Activated CD4-positive, alpha-beta T cell treated with anti-CD3 and anti-CD28 coated beads, Interleukin-2, amount 10 ng/mL, durations not matched to agents 24 days and 14 days (primary cell): ENCODE measurements at regions of chrX and their contacts with region 1.

Region 1: GRCh38 chrX:57918750-57919436 is 8.6 kb upstream of the ZXDA start:
- DNase-seq: peak; percentile 81
- H3K4me3 Mint-ChIP-seq: no peak overlapping the region
- H3K27ac Mint-ChIP-seq: no peak overlapping the region
- H3K4me1 Mint-ChIP-seq: no peaks in the 10 kb centered on the region
- H3K27me3 Mint-ChIP-seq: no peaks in the 10 kb centered on the region

Region 2: DNA sequence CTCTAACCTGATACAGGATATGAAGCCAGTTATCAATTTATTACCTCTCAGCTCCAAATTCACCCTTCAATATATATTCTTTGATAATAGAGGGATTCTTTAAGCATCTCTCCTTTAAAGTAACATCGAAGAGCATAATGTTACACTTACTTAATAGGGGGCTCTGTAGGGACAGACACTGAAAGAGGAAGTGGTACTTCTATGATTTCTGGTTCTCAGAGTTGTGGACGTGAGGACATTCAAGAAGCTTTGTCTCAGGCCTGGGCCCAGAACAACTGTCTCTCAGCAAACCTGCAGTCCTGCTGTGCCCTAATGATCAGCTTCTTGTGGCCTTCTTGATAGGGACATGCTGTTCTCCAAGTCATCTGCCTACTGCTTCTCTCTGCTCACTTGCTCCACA is 331.3 kb before region 1 on chrX:
- intact Hi-C with region 1: loop called (anchors 2 kb)
- DNase-seq: no peak
- H3K4me3 Mint-ChIP-seq: no peak overlapping the region
- H3K27ac Mint-ChIP-seq: no peak overlapping the region
- H3K4me1 Mint-ChIP-seq: peaks cover 3% of the 10 kb centered on the region
- H3K27me3 Mint-ChIP-seq: no peaks in the 10 kb centered on the region

Region 3: GRCh38 chrX:57821703-57822375 is 97.1 kb before region 1 on chrX:
- intact Hi-C with region 1: loop called (anchors 2 kb)
- DNase-seq: peak; percentile 77
- H3K4me3 Mint-ChIP-seq: no peak overlapping the region
- H3K27ac Mint-ChIP-seq: no peak overlapping the region
- H3K4me1 Mint-ChIP-seq: no peaks in the 10 kb centered on the region
- H3K27me3 Mint-ChIP-seq: no peaks in the 10 kb centered on the region

Region 4: GRCh38 chrX:57929373-57929772 is 10.5 kb after region 1 on chrX:
- intact Hi-C with region 1: no loop called
- DNase-seq: peak; percentile 60
- H3K4me3 Mint-ChIP-seq: no peak overlapping the region
- H3K27ac Mint-ChIP-seq: no peak overlapping the region
- H3K4me1 Mint-ChIP-seq: peaks cover 6% of the 10 kb centered on the region
- H3K27me3 Mint-ChIP-seq: no peaks in the 10 kb centered on the region